Naive thymus-derived CD4-positive, alpha-beta T cell (primary cell): ENCODE measurements at regions of chr9 and their contacts with region 1.

Region 1: DNA sequence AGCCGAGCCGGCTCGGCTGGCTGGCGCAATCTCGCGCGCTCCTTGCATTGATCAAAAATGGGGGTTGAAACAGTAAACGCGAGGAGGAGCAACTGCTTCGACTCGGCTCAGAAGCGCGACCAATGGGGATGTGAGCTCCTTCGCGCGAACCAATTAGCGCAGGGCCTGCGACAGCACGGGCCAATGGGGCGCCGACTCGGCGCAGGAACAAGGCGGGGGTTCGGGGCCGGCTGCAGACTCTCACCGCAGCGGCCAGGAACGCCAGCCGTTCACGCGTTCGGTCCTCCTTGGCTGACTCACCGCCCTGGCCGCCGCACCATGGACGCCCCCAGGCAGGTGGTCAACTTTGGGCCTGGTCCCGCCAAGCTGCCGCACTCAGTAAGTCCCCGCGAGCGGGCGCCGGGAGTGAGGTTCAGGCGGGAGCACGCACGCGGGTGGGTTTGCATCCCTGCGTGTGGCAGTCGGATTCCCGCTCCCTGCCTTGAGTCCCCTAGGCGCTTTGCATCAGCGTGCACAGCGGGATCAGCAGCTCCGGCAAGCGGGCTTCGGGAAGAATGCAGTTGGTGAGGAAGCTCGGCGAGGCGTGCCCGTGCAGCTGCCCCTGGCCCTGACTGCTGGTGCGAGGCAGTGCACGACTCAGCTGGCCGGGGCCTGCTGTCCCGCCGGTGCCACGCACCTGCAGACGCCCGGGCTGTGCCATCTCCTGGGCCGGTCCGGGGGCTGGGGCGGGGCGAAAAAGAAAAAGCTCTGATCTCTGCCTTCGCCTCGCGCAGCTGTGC is at the start of gene PSAT1:
- DNase-seq: peak; percentile 69 to 91 (median 88)
- ATAC-seq: peak; percentile 99
- H3K4me3 ChIP-seq: peak within 1 kb of the TSS; percentile 86
- H3K4me3 Mint-ChIP-seq: peak within 1 kb of the TSS; percentile 86 to 95 (median 92)
- H3K27ac ChIP-seq: peak within 1 kb of the TSS; percentile 56
- H3K27ac Mint-ChIP-seq: peak within 1 kb of the TSS; percentile 60 to 95 (median 81)
- H3K4me1 ChIP-seq: peaks cover 4 to 8% of the 10 kb centered on the region in 2 donors
- H3K4me1 Mint-ChIP-seq: peaks cover 21 to 59% (median 44%) of the 10 kb centered on the region in 7 donors
- H3K27me3 ChIP-seq: no peaks in the 10 kb centered on the region
- H3K27me3 Mint-ChIP-seq: peaks cover 0 to 5% (median 0%) of the 10 kb centered on the region in 5 donors
- total RNA-seq, gene PSAT1: 1.6 to 65.2 (median 9.5) TPM

Region 2: DNA sequence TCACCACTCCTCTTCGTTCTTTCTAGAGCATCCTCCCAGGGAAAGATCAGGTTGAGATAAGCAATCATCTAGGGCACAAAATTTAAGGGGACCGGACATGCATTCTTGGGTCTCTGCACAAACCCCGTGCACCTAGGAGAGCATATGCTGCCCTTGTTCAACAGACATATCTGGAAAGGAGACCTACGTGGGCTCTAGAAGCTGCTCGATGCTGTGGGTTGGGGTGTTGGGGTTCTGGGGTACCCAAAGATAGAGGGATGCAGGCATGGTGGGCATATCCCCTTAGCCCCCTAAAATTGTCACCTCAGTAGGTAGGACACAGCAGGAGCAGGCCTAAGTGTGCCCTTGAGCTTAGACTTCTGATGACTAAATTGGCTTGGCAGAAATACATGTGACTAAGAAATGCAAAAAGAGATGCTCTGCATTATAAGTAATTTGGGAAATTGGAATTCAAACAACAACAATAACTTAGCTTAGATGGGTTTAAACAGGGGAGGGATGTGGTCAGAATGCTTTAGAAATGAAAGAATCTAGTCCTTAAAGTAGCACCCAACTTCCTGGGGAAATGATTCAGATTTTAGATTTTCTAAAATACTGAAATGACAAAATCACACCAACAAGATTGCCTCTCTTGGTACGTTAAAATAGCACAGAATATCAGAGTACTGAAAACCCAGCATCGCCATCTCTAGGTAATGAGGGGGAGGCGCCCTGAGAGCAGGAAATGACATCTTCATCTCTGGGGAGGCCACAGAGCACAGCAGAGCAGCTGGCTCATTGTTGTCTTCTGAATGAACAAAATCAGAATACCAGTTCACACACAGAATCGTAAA is 821.2 kb before region 1 on chr9:
- CTCF ChIA-PET with region 1: no interaction called
- POLR2A ChIA-PET with region 1: no interaction called
- intact Hi-C with region 1: loop called in 1 of 2 experiments (anchors 1 kb)
- DNase-seq: peak in 8 of 9 donors; percentile 24 to 64 (median 48)
- ATAC-seq: peak; percentile 96
- H3K4me3 ChIP-seq: peak overlapping the region; percentile 1
- H3K4me3 Mint-ChIP-seq: peak overlapping the region; percentile 13 to 74 (median 52)
- H3K27ac ChIP-seq: peak overlapping the region; percentile 64
- H3K27ac Mint-ChIP-seq: peak overlapping the region; percentile 90 to 97 (median 95)
- H3K4me1 ChIP-seq: peaks cover 0 to 19% of the 10 kb centered on the region in 2 donors
- H3K4me1 Mint-ChIP-seq: peaks cover 7 to 37% (median 29%) of the 10 kb centered on the region in 7 donors
- H3K27me3 ChIP-seq: no peaks in the 10 kb centered on the region
- H3K27me3 Mint-ChIP-seq: no peaks in the 10 kb centered on the region

Region 3: DNA sequence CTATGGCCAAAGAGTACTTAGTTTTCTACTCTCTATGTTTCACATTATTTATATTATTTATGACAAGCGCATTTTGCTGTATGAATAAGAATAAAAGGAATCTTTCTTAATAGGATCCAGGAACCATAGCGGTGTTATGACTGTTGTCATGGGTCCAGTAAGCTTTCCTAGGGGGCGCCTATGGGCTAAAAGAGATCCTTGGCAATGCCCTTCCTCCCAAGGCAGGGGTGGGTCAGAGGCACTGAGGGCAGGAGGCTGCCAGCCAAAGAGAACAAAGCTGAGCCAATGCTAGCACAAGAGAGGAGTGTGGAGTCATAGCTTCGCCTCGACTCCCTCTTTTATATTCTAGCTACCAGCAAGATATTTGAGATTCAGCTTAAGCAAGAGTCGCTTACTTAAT is 167.1 kb before region 1 on chr9:
- CTCF ChIA-PET with region 1: no interaction called
- POLR2A ChIA-PET with region 1: no interaction called
- intact Hi-C with region 1: loop called in 1 of 2 experiments (anchors 10 kb)
- DNase-seq: no peak
- ATAC-seq: no peak
- H3K4me3 ChIP-seq: no peak overlapping the region
- H3K4me3 Mint-ChIP-seq: no peak overlapping the region
- H3K27ac ChIP-seq: no peak overlapping the region
- H3K27ac Mint-ChIP-seq: no peak overlapping the region
- H3K4me1 ChIP-seq: peaks cover 6 to 11% of the 10 kb centered on the region in 2 donors
- H3K4me1 Mint-ChIP-seq: peaks cover 9 to 22% (median 17%) of the 10 kb centered on the region in 7 donors
- H3K27me3 ChIP-seq: no peaks in the 10 kb centered on the region
- H3K27me3 Mint-ChIP-seq: peaks cover 0 to 17% (median 0%) of the 10 kb centered on the region in 5 donors

Region 4: DNA sequence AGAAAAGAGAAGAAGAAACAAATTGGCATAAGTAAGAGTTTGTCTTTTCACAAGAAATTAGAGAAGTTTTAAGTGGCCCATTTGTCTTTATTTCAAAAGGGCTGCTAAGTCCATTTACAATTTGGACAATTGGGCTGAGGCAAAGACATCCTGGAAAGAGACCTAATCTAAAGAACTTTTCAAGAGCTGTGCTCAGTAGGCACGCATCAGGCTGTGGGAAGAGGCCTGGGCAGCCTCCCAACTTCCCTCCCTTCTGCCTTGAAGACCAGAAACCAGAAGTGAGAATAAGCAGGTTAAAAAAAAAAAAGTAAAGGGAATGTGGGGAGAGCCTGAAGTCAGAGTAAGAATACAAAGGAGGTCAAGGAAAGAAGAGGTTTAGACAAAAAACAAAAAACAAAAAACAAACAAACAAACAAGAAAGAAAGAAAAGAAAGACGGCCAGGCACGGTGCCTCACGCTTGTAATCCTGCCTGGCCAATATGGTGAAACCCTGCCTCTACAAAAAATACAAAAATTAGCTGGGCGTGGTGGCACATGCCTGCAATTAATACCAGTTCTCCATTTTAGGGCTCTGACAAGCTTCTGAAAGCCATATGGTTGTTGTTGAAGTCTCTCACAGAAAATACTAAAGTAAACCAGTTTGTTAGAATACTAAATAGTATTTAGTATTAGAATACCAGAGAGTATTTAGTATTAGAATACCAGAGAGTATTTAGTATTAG is 109.2 kb before region 1 on chr9:
- CTCF ChIA-PET with region 1: no interaction called
- POLR2A ChIA-PET with region 1: no interaction called
- intact Hi-C with region 1: no loop called
- DNase-seq: no peak
- ATAC-seq: no peak
- H3K4me3 ChIP-seq: no peak overlapping the region
- H3K4me3 Mint-ChIP-seq: no peak overlapping the region
- H3K27ac ChIP-seq: no peak overlapping the region
- H3K27ac Mint-ChIP-seq: peak overlapping the region in 2 of 9 donors; percentile 9 to 71
- H3K4me1 ChIP-seq: no peaks in the 10 kb centered on the region
- H3K4me1 Mint-ChIP-seq: peaks cover 0 to 7% (median 0%) of the 10 kb centered on the region in 7 donors
- H3K27me3 ChIP-seq: no peaks in the 10 kb centered on the region
- H3K27me3 Mint-ChIP-seq: peaks cover 0 to 28% (median 0%) of the 10 kb centered on the region in 5 donors

Region 5: GRCh38 chr9:78235756-78236538 is 61.1 kb before region 1 on chr9 and contains the start of gene CEP78:
- CTCF ChIA-PET with region 1: no interaction called
- POLR2A ChIA-PET with region 1: interaction called, 3 read pairs
- intact Hi-C with region 1: loop called (anchors 1 kb)
- DNase-seq: peak; percentile 67 to 88 (median 81)
- ATAC-seq: peak; percentile 96
- H3K4me3 ChIP-seq: peak within 1 kb of the TSS; percentile 86
- H3K4me3 Mint-ChIP-seq: peak within 1 kb of the TSS in 4 of 10 donors; percentile 74 to 98 (median 98)
- H3K27ac ChIP-seq: peak within 1 kb of the TSS; percentile 72
- H3K27ac Mint-ChIP-seq: peak within 1 kb of the TSS; percentile 91 to 98 (median 95)
- H3K4me1 ChIP-seq: peaks cover 5 to 12% of the 10 kb centered on the region in 2 donors
- H3K4me1 Mint-ChIP-seq: peaks cover 28 to 46% (median 40%) of the 10 kb centered on the region in 7 donors
- H3K27me3 ChIP-seq: no peaks in the 10 kb centered on the region
- H3K27me3 Mint-ChIP-seq: peaks cover 0 to 3% (median 0%) of the 10 kb centered on the region in 5 donors
- total RNA-seq, gene CEP78: 14.7 to 34.8 (median 23.1) TPM

Region 6: DNA sequence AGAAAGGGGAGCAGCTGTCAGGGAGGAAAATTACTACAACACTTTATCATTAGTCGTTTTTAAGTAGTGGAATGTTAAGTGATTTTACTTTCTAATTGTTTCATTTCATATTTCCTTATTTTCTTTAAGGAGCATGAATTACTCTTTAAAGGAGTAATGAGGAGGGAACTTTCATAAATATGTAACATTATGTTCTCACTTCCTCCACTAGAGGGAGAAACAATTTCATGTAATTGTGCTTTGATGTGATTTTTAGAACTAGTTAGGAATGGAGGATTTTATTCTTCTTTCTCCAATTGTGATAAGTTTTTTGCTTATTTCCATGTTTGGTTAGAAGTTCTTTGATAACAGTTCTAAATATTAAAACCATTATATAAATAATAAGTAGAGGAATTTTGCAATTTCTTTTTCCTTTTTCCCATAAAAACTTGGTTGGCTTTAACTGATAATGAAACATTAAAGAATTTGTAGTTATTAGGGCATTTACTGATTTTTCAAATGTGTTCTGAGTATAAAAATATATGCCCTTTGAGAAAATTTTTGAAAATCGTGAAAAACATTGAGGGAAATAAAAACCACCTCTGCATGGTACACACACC is 35.6 kb before region 1 on chr9:
- CTCF ChIA-PET with region 1: interaction called, 4 read pairs
- POLR2A ChIA-PET with region 1: no interaction called
- intact Hi-C with region 1: loop called (anchors 1 kb)
- DNase-seq: peak in 4 of 9 donors; percentile 21 to 35 (median 32)
- ATAC-seq: no peak
- H3K4me3 ChIP-seq: no peak overlapping the region
- H3K4me3 Mint-ChIP-seq: no peak overlapping the region
- H3K27ac ChIP-seq: no peak overlapping the region
- H3K27ac Mint-ChIP-seq: peak overlapping the region in 1 of 9 donors; percentile 43
- H3K4me1 ChIP-seq: no peaks in the 10 kb centered on the region
- H3K4me1 Mint-ChIP-seq: peaks cover 0 to 3% (median 0%) of the 10 kb centered on the region in 7 donors
- H3K27me3 ChIP-seq: no peaks in the 10 kb centered on the region
- H3K27me3 Mint-ChIP-seq: no peaks in the 10 kb centered on the region